ENCODE measurements at regions of chr12 and their contacts with region 1.

Region 1: GRCh38 chr12:949453-950191 is at the start of gene RAD52:
- DNase-seq: peak; percentile 98
- H3K4me3 Mint-ChIP-seq: peak within 1 kb of the TSS; percentile 93
- H3K27ac Mint-ChIP-seq: peak within 1 kb of the TSS; percentile 96
- H3K4me1 Mint-ChIP-seq: peaks cover 34% of the 10 kb centered on the region
- H3K27me3 Mint-ChIP-seq: no peaks in the 10 kb centered on the region
- total RNA-seq, gene RAD52: 15.6 to 17.9 TPM

Region 2: DNA sequence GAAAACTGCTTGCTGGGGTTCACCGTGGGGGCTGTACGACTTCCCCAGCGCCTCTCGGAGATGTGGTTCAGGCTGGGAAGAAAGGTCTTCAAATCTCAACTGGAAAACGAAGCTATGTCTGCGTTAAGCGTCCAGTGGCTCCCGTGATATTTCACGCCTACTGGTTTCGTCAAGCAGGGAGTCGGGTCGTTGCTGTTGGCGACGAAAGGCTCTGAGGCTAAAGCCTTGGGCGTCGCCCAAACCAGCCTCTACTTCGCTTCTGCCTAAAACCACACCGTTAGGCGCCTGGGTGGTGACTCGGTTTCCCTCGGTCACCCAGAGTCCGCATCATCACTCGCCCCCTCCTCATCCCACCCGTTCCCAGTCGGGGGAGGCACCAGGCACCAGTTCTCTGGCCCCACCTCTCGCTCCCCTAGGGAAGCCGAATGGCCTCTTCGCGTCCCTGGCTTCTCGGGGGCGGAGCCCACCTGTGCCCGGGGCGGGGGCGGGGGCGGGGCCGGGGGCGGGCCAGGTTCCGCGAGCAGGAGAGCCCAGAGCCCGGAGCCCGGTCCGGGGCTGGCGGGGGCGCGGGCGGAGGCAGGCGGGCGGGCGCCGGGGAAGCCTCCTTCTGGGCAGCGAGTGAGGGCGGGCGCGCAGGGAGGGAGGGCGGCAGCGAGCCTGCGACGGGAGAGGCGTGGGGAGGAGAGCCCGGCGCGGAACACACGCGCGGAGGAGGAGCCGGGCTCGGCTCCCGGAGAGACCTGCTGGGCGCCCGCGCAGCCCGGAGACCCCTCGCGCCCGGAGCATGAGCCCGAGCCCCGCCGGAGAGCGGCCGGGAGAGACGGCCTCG is 490.0 kb before region 1 on chr12 and contains the start of gene B4GALNT3:
- CTCF ChIA-PET with region 1: no interaction called
- intact Hi-C with region 1: loop called (anchors 10 kb)
- DNase-seq: peak; percentile 25
- H3K4me3 Mint-ChIP-seq: peak within 1 kb of the TSS; percentile 66
- H3K27ac Mint-ChIP-seq: no peak within 1 kb of the TSS
- H3K4me1 Mint-ChIP-seq: peaks cover 11% of the 10 kb centered on the region
- H3K27me3 Mint-ChIP-seq: peaks cover 22% of the 10 kb centered on the region
- total RNA-seq, gene B4GALNT3: 1.1 to 1.2 TPM

Region 3: GRCh38 chr12:614411-614970 is 335.1 kb before region 1 on chr12:
- CTCF ChIA-PET with region 1: interaction called, 4 read pairs
- intact Hi-C with region 1: loop called (anchors 2 kb)
- DNase-seq: peak; percentile 72
- H3K4me3 Mint-ChIP-seq: no peak overlapping the region
- H3K27ac Mint-ChIP-seq: no peak overlapping the region
- H3K4me1 Mint-ChIP-seq: peaks cover 30% of the 10 kb centered on the region
- H3K27me3 Mint-ChIP-seq: no peaks in the 10 kb centered on the region

Region 4: GRCh38 chr12:789852-790563 is 159.6 kb before region 1 on chr12:
- CTCF ChIA-PET with region 1: no interaction called
- intact Hi-C with region 1: no loop called
- DNase-seq: no peak
- H3K4me3 Mint-ChIP-seq: no peak overlapping the region
- H3K27ac Mint-ChIP-seq: no peak overlapping the region
- H3K4me1 Mint-ChIP-seq: peaks cover 77% of the 10 kb centered on the region
- H3K27me3 Mint-ChIP-seq: no peaks in the 10 kb centered on the region

Region 5: GRCh38 chr12:810671-811415 is 138.8 kb before region 1 on chr12:
- CTCF ChIA-PET with region 1: interaction called, 17 read pairs
- intact Hi-C with region 1: loop called (anchors 1 kb)
- DNase-seq: peak; percentile 77
- H3K4me3 Mint-ChIP-seq: no peak overlapping the region
- H3K27ac Mint-ChIP-seq: peak overlapping the region; percentile 54
- H3K4me1 Mint-ChIP-seq: peaks cover 64% of the 10 kb centered on the region
- H3K27me3 Mint-ChIP-seq: no peaks in the 10 kb centered on the region

Region 6: GRCh38 chr12:905261-906031 is 44.2 kb before region 1 on chr12:
- CTCF ChIA-PET with region 1: interaction called, 4 read pairs
- intact Hi-C with region 1: loop called (anchors 2 kb)
- DNase-seq: peak; percentile 21
- H3K4me3 Mint-ChIP-seq: no peak overlapping the region
- H3K27ac Mint-ChIP-seq: peak overlapping the region; percentile 52
- H3K4me1 Mint-ChIP-seq: peaks cover 32% of the 10 kb centered on the region
- H3K27me3 Mint-ChIP-seq: no peaks in the 10 kb centered on the region

Region 7: DNA sequence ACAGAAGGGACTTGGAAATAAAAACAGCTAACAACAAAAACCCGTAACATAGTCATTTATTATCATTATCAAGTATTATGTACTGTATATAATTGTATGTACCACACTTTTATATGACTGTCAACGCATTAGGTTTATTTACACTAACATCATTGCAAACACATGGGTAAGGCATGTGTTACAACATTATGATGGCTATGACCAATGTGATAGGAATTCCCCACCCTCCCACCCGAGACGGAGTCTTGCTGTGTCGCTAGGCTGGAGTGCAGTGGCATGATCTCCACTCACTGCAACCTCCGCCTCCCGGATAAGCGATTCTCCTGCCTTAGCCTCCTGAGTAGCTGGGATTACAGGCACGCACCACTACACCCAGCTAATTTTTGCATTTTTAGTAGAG is 124.0 kb after region 1 on chr12:
- CTCF ChIA-PET with region 1: no interaction called
- intact Hi-C with region 1: no loop called
- DNase-seq: no peak
- H3K4me3 Mint-ChIP-seq: no peak overlapping the region
- H3K27ac Mint-ChIP-seq: no peak overlapping the region
- H3K4me1 Mint-ChIP-seq: peaks cover 8% of the 10 kb centered on the region
- H3K27me3 Mint-ChIP-seq: no peaks in the 10 kb centered on the region

Region 8: DNA sequence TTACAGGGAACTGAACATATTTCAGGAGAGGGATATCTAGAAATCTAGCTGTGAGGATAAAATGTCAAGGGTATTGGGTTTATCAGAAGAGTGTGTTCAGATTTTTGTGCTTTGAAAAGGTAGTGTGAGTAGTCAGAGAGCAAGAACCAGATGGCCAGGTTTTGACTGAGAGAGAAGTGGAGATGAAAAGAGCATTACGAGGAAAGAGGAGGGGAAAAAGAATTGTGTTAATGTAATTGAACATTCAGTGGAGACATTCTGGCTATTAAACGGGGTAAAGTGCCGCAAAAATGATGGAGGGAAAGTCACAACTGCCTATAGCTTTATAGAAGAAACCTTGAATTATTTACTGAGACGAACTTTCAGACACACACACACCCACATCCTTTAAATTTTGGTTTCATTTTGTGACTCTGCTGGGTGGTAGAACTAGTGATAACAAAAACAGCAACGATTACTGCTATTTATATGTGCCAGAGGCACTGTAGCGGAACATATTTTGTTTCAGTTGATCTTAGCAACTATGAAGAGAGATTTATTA is 255.0 kb after region 1 on chr12:
- CTCF ChIA-PET with region 1: no interaction called
- intact Hi-C with region 1: loop called (anchors 5 kb)
- DNase-seq: peak; percentile 18
- H3K4me3 Mint-ChIP-seq: no peak overlapping the region
- H3K27ac Mint-ChIP-seq: no peak overlapping the region
- H3K4me1 Mint-ChIP-seq: peaks cover 9% of the 10 kb centered on the region
- H3K27me3 Mint-ChIP-seq: no peaks in the 10 kb centered on the region